Psoas muscle (tissue), 8 donors: ENCODE measurements at regions of chrX and their contacts with region 1.

Region 1: DNA sequence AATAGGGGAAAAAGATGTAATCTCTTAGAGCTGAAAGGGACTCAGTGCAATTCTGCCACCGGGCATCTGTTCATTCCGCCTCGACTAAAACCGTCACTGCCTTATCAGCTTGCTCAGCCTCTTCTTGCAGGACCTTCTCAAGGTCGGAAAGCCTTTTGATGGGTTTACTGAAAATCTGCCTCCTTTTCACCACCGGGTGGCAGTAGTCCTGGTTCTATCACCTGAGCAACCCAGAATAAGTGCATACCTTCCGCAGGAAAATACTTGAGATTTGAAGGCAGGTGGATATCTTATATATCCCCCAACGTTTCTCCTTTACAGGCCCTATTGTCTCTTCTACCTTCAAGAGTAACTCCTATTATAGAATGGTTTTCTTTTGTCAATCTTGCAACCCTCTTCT is 103.4 kb upstream of the PAK3 start:
- DNase-seq: no peak
- ATAC-seq: no peak
- H3K4me3 ChIP-seq: no peak overlapping the region
- H3K27ac ChIP-seq: no peak overlapping the region
- H3K4me1 ChIP-seq: no peaks in the 10 kb centered on the region
- H3K27me3 ChIP-seq: peaks cover 0 to 15% (median 0%) of the 10 kb centered on the region in 3 donors
- CTCF ChIP-seq: peak; percentile 31

Region 2: DNA sequence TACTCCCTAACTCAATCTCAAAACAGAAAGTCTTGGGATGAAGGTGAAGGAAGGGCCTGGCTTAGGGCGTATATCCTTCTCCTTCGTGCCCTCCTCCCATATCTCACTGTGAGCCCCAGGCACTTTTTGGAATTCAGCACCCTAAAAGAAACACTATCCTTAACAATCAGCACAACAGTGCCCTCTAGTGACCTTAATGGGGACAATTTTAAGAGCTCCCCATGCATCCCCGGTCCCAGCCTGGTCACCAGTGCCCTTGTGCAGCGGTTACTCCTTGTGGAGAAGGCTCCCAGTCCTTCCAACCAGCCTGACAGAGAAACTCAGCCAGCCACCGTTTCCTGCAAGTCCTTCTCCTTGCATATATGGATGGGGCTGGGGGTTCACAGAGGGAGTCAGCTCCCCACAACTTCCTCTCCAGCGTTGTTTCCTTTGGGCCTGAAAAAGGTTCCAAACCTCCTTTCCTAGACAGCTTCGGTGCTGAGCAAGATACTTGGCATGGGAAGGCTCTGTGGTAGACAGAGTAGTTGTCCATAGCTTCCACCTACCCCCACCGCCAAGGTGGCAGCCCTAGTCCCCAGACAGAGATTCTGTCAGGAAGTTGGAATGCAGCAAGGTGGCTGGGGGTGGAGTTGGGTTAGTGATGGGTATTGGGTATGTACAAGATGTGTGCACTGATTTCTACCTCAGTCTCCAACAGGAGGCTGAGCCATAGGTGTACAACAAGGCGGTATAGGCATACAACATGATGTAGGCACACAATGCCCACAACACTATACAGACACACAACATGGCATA is 107.8 kb after region 1 on chrX:
- intact Hi-C with region 1: loop called in 1 of 2 experiments (anchors 5 kb)
- DNase-seq: no peak
- ATAC-seq: no peak
- H3K4me3 ChIP-seq: no peak overlapping the region
- H3K27ac ChIP-seq: no peak overlapping the region
- H3K4me1 ChIP-seq: no peaks in the 10 kb centered on the region
- H3K27me3 ChIP-seq: peaks cover 0 to 21% (median 3%) of the 10 kb centered on the region in 3 donors
- CTCF ChIP-seq: no peak